ENCODE measurements at regions of chr6 and their contacts with region 1.

Region 1: GRCh38 chr6:28225056-28225834 is at the start of gene ZSCAN9:
- DNase-seq: peak; percentile 89
- H3K4me3 ChIP-seq: peak within 1 kb of the TSS; percentile 48 to 99 (median 86)
- H3K27ac ChIP-seq: peak within 1 kb of the TSS; percentile 77
- H3K4me1 ChIP-seq: peaks cover 10% of the 10 kb centered on the region
- H3K27me3 ChIP-seq: no peaks in the 10 kb centered on the region
- CTCF ChIP-seq: no peak
- POLR2A ChIP-seq: peak; percentile 82
- total RNA-seq, gene ZSCAN9: 18.0 and 18.6 TPM in 2 replicates

Region 2: DNA sequence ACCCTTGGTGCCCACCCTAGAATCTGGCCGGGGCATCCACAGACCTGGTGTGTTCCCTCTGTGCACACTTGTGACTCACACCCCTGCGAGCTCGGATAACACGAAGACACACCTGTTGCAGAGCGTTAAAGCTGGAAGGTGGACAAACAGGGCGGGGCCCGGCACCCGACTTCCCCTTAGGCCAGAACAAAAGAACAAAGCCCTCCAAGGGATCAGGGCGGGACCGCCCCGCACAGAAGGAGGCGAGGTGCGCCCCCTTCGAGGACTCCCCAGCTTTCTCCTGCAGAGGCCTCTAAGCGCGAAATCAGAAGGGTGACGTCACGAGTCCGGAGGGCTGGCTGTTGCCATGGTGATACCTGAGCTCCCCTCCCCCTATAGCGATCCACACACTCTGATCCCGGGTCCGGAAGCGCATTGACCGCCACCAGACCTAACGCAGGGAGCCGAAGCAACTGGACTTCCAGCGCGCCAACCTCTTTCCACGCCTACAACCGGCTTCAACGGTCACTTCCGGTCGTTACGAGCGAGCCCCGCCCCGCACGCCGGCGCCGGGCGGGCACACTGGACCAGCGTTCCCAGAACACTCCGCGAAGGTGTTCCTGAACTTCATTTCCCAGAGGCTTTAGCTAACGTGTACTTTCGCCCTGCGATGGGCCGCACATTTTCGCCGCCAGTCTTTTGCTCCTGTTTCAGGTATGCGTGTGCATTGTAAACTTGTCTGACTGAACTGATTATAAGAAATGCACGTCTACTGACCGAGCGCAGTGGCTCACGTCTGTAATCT is 752.4 kb before region 1 on chr6 and contains the start of gene ZNF184:
- CTCF ChIA-PET with region 1: no interaction called
- POLR2A ChIA-PET with region 1: no interaction called
- dilution Hi-C with region 1: no loop called
- intact Hi-C with region 1: loop called (anchors 10 kb)
- DNase-seq: peak; percentile 98
- H3K4me3 ChIP-seq: peak within 1 kb of the TSS; percentile 68 to 94 (median 82)
- H3K27ac ChIP-seq: peak within 1 kb of the TSS; percentile 74
- H3K4me1 ChIP-seq: peaks cover 9% of the 10 kb centered on the region
- H3K27me3 ChIP-seq: peaks cover 9 to 14% of the 10 kb centered on the region in 2 experiments
- CTCF ChIP-seq: no peak
- POLR2A ChIP-seq: peak; percentile 84
- total RNA-seq, gene ZNF184: 5.4 and 6.5 TPM in 2 replicates

Region 3: DNA sequence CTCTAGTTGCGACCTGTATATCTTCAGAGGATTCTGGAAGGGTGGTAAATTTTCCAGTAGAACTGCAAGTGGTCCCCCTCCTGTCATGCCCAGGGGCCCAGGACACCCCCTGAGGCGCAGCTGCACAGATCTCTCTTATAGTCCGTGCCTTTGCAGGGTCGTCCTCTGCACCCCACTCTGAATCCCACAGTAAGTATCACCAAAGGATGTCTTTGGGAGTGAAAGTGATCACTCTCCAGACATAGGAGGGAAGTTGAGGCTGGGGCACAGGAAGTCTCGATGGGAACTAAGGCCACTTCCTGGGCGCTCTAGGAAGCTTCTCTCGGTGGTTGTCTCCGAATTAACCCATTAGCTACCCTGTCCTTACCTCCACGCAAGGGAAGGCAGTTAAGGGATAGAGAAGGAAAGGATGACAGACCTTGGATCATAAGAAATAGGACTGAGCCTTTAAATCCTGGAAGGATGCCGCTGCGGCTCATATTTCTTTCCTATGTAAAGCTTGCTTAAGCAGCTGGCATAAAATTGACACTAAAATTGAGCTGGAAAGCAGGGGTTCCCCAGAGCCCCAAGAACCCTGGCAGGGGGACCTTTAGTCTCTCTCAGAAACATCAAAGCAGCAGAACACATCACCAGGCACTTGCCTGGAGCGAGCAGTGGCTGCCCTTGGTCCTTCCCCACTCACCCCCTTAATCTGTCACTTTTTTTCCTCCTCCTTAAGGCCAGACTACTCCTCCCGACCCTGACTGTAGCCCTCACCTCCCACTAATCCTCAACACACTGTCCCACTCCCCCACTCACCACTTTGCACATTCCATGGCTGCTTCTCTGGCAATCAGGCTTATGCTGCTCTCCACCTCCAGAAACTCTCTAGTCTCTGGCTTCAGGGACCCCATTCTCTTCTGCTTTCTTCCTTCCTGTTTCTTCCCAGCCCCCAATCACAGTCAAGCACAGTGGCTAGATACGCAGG is 27.0 kb after region 1 on chr6 and contains the start of gene ZKSCAN4:
- CTCF ChIA-PET with region 1: interaction called, 7 read pairs
- POLR2A ChIA-PET with region 1: no interaction called
- dilution Hi-C with region 1: no loop called
- intact Hi-C with region 1: loop called (anchors 1 kb)
- DNase-seq: peak; percentile 83
- H3K4me3 ChIP-seq: peak within 1 kb of the TSS; percentile 85 to 89 (median 85)
- H3K27ac ChIP-seq: no peak within 1 kb of the TSS
- H3K4me1 ChIP-seq: peaks cover 12% of the 10 kb centered on the region
- H3K27me3 ChIP-seq: no peaks in the 10 kb centered on the region
- CTCF ChIP-seq: no peak
- POLR2A ChIP-seq: no peak
- total RNA-seq, gene ZKSCAN4: 3.6 and 4.1 TPM in 2 replicates

Region 4: GRCh38 chr6:28281288-28282064 is 56.2 kb after region 1 on chr6 and contains the start of gene PGBD1:
- CTCF ChIA-PET with region 1: interaction called, 3 read pairs
- POLR2A ChIA-PET with region 1: no interaction called
- dilution Hi-C with region 1: no loop called
- intact Hi-C with region 1: loop called (anchors 1 kb)
- DNase-seq: peak; percentile 77
- H3K4me3 ChIP-seq: peak within 1 kb of the TSS; percentile 68 to 96 (median 93)
- H3K27ac ChIP-seq: peak within 1 kb of the TSS; percentile 46
- H3K4me1 ChIP-seq: peaks cover 7% of the 10 kb centered on the region
- H3K27me3 ChIP-seq: no peaks in the 10 kb centered on the region
- CTCF ChIP-seq: no peak
- POLR2A ChIP-seq: peak; percentile 81
- total RNA-seq, gene PGBD1: 9.6 and 10.1 TPM in 2 replicates

Region 5: DNA sequence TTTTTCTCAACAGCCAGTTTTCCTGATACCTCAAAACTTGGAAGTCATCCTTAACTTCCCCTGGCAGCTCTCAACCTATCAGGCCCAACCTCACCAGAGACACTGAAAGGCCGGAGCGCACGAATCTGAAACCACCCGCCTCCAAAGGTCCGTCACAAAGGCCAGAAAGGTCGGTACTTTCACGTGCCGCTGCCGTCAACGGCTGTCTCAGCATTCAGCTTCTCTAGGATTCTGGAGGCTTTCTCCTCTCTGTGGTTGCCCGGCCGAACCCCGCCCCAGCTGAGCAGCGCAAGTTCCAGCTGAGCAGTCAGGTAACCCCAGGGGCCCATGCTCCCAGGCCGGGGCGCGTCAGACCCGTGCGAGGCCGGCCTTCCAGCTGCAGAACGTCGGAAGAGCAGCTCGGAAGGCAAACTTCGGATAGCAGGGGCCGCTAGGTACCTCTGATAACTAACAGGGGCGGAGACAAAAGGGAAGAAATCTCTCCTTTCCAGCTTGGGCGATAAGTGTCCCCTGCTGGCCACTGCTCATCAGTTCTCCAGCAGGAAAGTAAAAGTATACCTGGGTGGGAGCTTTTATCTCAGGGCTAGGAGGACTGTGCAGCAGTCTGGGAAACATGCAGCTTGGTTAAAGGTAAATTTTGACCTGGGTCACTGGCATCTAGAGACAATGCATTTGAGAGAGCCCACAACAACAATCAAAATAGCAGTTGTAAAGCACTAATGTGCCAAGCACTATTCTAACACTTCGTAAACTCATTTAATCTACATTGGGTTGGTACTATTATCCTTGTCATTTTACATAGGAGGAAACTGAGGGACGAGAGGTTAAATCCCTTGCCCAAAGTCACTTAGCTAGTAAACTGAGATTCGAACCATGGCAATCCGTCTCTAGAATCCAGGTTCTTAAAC is 158.2 kb after region 1 on chr6:
- CTCF ChIA-PET with region 1: no interaction called
- POLR2A ChIA-PET with region 1: no interaction called
- dilution Hi-C with region 1: no loop called
- intact Hi-C with region 1: loop called (anchors 1 kb)
- DNase-seq: peak; percentile 93
- H3K4me3 ChIP-seq: peak overlapping the region; percentile 37 to 45 (median 42)
- H3K27ac ChIP-seq: peak overlapping the region; percentile 14
- H3K4me1 ChIP-seq: peaks cover 9% of the 10 kb centered on the region
- H3K27me3 ChIP-seq: no peaks in the 10 kb centered on the region
- CTCF ChIP-seq: peak; percentile 54 to 62
- POLR2A ChIP-seq: no peak

Region 6: DNA sequence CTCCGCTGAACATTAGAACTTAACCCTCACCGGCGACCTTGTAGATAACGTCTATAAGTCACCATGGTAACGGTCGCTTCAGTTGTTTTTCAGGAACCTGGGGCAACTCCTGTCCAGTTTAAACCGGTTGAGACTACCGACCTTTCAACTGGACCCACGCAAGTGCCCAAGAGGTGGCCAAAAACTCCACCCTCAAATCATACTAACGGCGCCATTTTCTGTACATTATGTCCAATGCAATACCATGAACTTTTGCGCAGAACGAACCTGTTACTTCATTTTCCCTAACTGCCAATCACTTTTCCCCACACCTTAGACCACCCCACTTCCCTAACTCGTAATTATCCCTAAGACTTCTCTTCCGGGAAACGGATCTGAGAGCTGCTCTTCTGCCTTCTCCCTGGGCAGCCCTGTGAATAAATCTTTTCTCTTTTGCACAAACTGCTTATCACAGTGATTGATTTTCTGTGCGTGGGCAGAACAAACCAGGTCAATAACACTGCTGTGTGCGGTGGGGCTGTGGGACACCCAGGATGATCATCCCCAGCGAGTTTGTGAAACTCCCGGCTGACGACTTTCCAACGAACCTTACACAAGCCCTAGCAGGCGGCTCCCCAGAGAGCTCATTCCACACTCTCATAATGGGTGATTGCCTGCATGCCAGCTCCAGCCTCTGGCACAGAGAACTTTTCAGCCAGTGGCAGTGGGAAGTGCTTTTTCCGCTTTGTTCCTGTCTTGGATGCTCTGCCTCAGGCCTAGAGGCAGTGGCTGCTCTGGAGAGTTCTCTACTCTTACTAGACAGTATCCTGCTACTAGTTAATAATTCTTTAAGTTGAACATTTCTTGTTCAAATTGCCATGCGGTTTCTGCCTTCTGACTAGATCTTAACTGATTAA is 329.0 kb after region 1 on chr6:
- CTCF ChIA-PET with region 1: no interaction called
- POLR2A ChIA-PET with region 1: no interaction called
- dilution Hi-C with region 1: no loop called
- intact Hi-C with region 1: no loop called
- DNase-seq: no peak
- H3K4me3 ChIP-seq: no peak overlapping the region
- H3K27ac ChIP-seq: no peak overlapping the region
- H3K4me1 ChIP-seq: no peaks in the 10 kb centered on the region
- H3K27me3 ChIP-seq: peaks cover 5 to 17% of the 10 kb centered on the region in 2 experiments
- CTCF ChIP-seq: no peak
- POLR2A ChIP-seq: no peak